B cell (primary cell): ENCODE measurements at regions of chr1 and their contacts with region 1.

Region 1: DNA sequence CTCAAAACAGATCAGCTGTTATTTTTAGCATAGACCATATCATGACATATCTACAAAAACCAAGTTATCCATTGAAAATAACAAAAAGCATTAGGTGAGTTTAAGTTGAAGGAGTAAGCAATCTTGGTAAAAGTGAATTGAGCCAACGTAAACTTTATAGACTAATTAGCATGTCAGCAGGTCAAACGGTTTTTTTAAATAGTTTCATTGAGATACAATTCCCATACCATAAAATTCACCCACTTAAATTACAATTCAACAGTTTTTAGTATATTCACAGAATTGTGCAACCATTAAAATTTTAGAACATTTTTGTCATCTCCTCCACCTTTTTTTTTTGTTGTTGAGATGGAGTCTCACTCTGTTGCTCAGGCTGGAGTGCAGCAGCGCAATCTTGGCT is 92.1 kb downstream of the TGFBR3 start:
- DNase-seq: no peak
- ATAC-seq: no peak
- H3K4me3 ChIP-seq: no peak overlapping the region
- H3K4me3 Mint-ChIP-seq: no peak overlapping the region
- H3K27ac ChIP-seq: no peak overlapping the region
- H3K27ac Mint-ChIP-seq: no peak overlapping the region
- H3K4me1 ChIP-seq: no peaks in the 10 kb centered on the region
- H3K4me1 Mint-ChIP-seq: no peaks in the 10 kb centered on the region
- H3K27me3 ChIP-seq: no peaks in the 10 kb centered on the region
- H3K27me3 Mint-ChIP-seq: peaks cover 2% of the 10 kb centered on the region
- CTCF ChIP-seq: no peak

Region 2: DNA sequence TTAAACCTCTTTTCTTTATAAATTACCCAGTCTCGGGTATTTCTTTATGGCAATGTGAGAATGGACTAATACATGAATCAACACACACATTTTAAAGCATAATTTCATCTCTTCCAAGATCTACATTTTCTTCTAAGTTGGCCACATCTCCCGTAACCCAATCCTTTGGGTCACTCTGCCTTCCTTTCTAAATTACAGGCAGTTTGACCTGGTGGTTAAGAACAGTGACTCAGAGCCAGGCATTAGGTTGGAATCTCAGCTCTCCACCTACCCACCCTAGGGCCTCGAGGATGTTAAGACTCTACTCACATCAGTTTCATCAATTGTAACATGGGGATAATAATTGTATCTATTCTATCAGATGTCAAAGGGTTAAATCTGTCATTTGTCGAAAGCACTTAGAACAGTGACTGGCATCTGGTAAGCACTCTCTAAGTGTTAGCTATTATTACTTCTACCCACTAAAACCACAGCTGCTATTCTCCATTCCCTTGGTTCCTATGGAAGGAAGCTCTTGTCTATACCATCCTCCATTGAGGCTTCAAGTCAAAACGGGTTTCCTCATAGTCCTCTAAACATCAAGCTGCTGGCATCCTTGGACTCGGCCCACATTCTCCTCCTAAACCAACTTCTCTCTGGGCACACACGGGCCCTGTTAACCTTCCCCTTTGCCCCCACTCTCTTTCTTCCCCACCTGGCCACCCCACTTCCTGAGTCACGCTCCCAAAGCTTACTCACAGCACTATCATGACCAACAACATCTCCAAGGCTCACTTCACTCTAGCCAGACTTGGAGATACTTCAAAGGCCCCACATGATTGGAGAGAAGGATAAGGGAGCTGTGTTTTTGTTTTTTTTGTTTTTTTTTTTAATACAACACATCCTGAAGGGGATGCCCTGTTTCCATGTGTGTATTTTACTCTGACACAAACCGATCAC is 24.8 kb before region 1 on chr1:
- CTCF ChIA-PET with region 1: no interaction called
- POLR2A ChIA-PET with region 1: no interaction called
- intact Hi-C with region 1: no loop called
- DNase-seq: no peak
- ATAC-seq: no peak
- H3K4me3 ChIP-seq: no peak overlapping the region
- H3K4me3 Mint-ChIP-seq: no peak overlapping the region
- H3K27ac ChIP-seq: no peak overlapping the region
- H3K27ac Mint-ChIP-seq: no peak overlapping the region
- H3K4me1 ChIP-seq: no peaks in the 10 kb centered on the region
- H3K4me1 Mint-ChIP-seq: no peaks in the 10 kb centered on the region
- H3K27me3 ChIP-seq: no peaks in the 10 kb centered on the region
- H3K27me3 Mint-ChIP-seq: no peaks in the 10 kb centered on the region
- CTCF ChIP-seq: no peak

Region 3: DNA sequence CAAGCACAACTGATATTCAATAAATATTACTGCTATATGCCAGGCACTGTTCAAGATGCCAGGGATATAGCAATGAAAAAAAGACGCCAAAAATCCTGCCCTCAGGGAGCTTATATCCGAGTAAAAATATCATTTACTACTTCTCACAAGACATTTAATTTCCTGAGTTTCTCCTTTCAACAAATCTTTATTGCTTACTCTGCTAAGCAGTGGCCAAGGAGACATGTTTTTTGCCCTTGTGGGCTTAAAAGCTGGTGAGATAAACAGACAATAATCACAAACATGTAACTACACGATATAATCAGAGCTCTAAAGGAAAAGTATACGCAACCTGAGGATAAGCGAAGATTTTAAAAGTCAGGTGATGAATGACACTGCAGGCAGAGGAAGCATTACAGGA is 72.5 kb after region 1 on chr1:
- CTCF ChIA-PET with region 1: no interaction called
- POLR2A ChIA-PET with region 1: interaction called, 12 read pairs
- intact Hi-C with region 1: no loop called
- DNase-seq: no peak
- ATAC-seq: no peak
- H3K4me3 ChIP-seq: no peak overlapping the region
- H3K4me3 Mint-ChIP-seq: no peak overlapping the region
- H3K27ac ChIP-seq: no peak overlapping the region
- H3K27ac Mint-ChIP-seq: no peak overlapping the region
- H3K4me1 ChIP-seq: no peaks in the 10 kb centered on the region
- H3K4me1 Mint-ChIP-seq: no peaks in the 10 kb centered on the region
- H3K27me3 ChIP-seq: no peaks in the 10 kb centered on the region
- H3K27me3 Mint-ChIP-seq: peaks cover 10% of the 10 kb centered on the region
- CTCF ChIP-seq: no peak